GM12878 (cell line): ENCODE measurements at regions of chr7 and their contacts with region 1.

Region 1: GRCh38 chr7:6323967-6324701 is 51.7 kb upstream of the CYTH3 start:
- DNase-seq: no peak
- ATAC-seq: no peak
- H3K4me3 ChIP-seq: no peak overlapping the region
- H3K27ac ChIP-seq: no peak overlapping the region
- H3K4me1 ChIP-seq: no peaks in the 10 kb centered on the region
- H3K27me3 ChIP-seq: no peaks in the 10 kb centered on the region
- CTCF ChIP-seq: no peak
- EP300 ChIP-seq: no peak
- POLR2A ChIP-seq: no peak
- RAD21 ChIP-seq: no peak

Region 2: GRCh38 chr7:5854738-5855137 is 469.4 kb before region 1 on chr7:
- CTCF ChIA-PET with region 1: interaction called, 15 read pairs
- POLR2A ChIA-PET with region 1: no interaction called
- RAD21 ChIA-PET with region 1: interaction called, 3 read pairs
- SMC1A ChIA-PET with region 1: interaction called, 4 read pairs
- in situ Hi-C with region 1: no loop called
- intact Hi-C with region 1: loop called (anchors 10 kb)
- DNase-seq: no peak
- ATAC-seq: no peak
- H3K4me3 ChIP-seq: no peak overlapping the region
- H3K27ac ChIP-seq: no peak overlapping the region
- H3K4me1 ChIP-seq: no peaks in the 10 kb centered on the region
- H3K27me3 ChIP-seq: no peaks in the 10 kb centered on the region
- CTCF ChIP-seq: no peak
- EP300 ChIP-seq: no peak
- POLR2A ChIP-seq: no peak
- RAD21 ChIP-seq: no peak

Region 3: DNA sequence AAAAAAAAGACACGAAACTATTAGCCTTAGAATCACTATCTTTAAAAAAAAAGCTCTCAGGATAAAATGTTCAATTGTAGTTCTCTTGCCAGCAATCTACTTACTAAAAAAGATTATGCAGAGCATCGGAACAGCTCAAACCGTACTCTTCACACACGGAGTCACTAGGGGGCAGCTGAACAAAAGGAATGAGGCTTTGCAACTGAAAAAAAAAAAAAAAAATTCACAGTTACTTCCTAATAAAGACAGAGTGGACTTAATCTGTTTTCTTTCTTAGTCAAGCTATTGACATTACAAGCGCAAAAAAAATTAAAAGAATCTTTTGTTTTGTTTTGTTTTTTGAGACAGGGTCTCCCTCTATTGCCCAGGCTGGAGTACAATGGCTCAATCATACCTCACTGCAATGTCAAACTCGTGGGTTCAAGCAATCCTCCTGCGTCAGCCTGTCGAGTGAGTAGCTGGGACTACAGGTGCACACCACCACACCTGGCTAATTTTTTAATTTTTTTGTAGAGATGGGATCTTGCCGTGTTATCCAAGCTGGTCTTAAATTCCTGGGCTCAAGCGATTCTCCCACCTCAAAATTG is 326.8 kb before region 1 on chr7:
- CTCF ChIA-PET with region 1: interaction called, 20 read pairs
- POLR2A ChIA-PET with region 1: interaction called, 4 read pairs
- RAD21 ChIA-PET with region 1: interaction called, 6 read pairs
- SMC1A ChIA-PET with region 1: interaction called, 10 read pairs
- in situ Hi-C with region 1: no loop called
- intact Hi-C with region 1: loop called (anchors 2 kb)
- DNase-seq: no peak
- ATAC-seq: peak; percentile 71
- H3K4me3 ChIP-seq: no peak overlapping the region
- H3K27ac ChIP-seq: no peak overlapping the region
- H3K4me1 ChIP-seq: no peaks in the 10 kb centered on the region
- H3K27me3 ChIP-seq: no peaks in the 10 kb centered on the region
- CTCF ChIP-seq: peak; percentile 52 to 61 (median 56)
- EP300 ChIP-seq: no peak
- POLR2A ChIP-seq: no peak
- RAD21 ChIP-seq: peak; percentile 76

Region 4: DNA sequence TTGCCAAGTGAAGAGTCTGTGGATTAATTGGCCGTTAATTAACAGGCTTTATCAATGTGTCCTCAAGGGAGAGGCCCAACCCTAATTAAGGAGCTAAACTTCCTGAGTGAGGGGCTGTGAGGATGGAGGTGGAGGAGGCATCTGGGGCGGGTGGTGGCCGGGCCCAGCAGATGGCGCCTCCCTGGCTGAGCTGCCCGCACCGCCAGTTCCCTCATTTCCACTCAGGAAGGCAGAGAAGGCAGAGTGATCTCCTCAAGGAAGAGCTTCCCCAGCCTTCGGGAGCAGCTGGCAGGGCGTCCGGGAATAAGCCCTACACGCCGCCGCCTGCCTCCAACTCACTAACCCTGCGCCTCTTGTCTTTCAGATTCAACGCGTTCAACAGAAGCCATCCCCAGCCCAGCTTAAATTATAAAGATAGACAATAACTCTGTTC is 163.9 kb before region 1 on chr7:
- CTCF ChIA-PET with region 1: interaction called, 6 read pairs
- POLR2A ChIA-PET with region 1: no interaction called
- RAD21 ChIA-PET with region 1: interaction called, 3 read pairs
- SMC1A ChIA-PET with region 1: interaction called, 4 read pairs
- in situ Hi-C with region 1: no loop called
- intact Hi-C with region 1: loop called (anchors 1 kb)
- DNase-seq: no peak
- ATAC-seq: peak; percentile 16; the same call in 1 of the 3 replicates
- H3K4me3 ChIP-seq: no peak overlapping the region
- H3K27ac ChIP-seq: no peak overlapping the region
- H3K4me1 ChIP-seq: peaks cover 13% of the 10 kb centered on the region
- H3K27me3 ChIP-seq: no peaks in the 10 kb centered on the region
- CTCF ChIP-seq: peak in 1 of 3 experiments; percentile 16; a peak in 1 of 6 replicates
- EP300 ChIP-seq: no peak
- POLR2A ChIP-seq: no peak
- RAD21 ChIP-seq: no peak

Region 5: DNA sequence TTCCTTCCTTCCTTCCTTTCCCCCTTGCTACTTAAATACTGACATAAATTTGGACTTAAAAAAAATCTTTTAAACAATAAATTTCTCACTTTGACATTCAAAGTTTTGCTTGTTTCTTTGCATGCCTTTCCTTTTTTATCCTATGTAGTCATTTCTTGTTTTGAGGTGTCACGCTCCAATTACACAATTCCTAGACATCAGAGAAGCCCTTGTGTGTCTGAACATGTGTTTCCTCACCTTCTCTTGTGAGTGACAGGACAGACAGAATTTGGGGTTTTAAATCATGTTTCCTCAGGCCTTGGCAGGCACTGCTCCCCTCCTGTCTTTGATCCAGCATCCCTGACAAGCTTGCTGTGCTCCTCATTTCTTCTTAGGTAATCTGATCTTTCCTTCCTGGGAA is 143.0 kb before region 1 on chr7:
- CTCF ChIA-PET with region 1: no interaction called
- POLR2A ChIA-PET with region 1: no interaction called
- RAD21 ChIA-PET with region 1: no interaction called
- SMC1A ChIA-PET with region 1: no interaction called
- in situ Hi-C with region 1: no loop called
- intact Hi-C with region 1: loop called (anchors 5 kb)
- DNase-seq: no peak
- ATAC-seq: no peak
- H3K4me3 ChIP-seq: no peak overlapping the region
- H3K27ac ChIP-seq: no peak overlapping the region
- H3K4me1 ChIP-seq: peaks cover 5% of the 10 kb centered on the region
- H3K27me3 ChIP-seq: no peaks in the 10 kb centered on the region
- CTCF ChIP-seq: no peak
- EP300 ChIP-seq: no peak
- POLR2A ChIP-seq: no peak
- RAD21 ChIP-seq: no peak

Region 6: DNA sequence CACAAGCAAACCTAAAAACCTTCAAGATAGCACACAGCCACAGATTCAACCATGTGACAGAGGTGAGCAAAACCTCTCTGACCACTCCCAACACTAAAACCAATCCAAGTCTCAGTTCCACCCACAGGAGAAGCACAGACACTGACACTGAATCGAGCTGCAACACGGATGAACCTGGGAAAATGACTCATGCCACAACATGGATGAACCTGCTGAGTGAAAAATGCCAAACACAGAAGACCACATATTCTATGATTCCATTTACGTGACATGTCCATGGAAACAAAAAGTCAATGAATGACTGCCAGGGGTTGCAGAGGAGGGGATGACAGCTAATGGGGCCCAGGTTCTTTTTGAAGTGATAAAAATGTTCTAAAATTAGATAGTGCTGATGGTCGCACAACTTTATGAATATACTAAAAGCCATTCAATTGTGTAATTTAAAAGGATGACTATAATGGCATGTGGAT is 73.7 kb before region 1 on chr7:
- CTCF ChIA-PET with region 1: interaction called, 4 read pairs
- POLR2A ChIA-PET with region 1: no interaction called
- RAD21 ChIA-PET with region 1: interaction called, 3 read pairs
- SMC1A ChIA-PET with region 1: interaction called, 4 read pairs
- in situ Hi-C with region 1: no loop called
- intact Hi-C with region 1: loop called (anchors 2 kb)
- DNase-seq: peak; percentile 93
- ATAC-seq: peak; percentile 95
- H3K4me3 ChIP-seq: peak overlapping the region; percentile 15; the same call in 1 of the 2 replicates
- H3K27ac ChIP-seq: peak overlapping the region; percentile 77
- H3K4me1 ChIP-seq: peaks cover 17% of the 10 kb centered on the region
- H3K27me3 ChIP-seq: no peaks in the 10 kb centered on the region
- CTCF ChIP-seq: no peak
- EP300 ChIP-seq: peak; percentile 69 to 84; a peak in 3 of 4 replicates
- POLR2A ChIP-seq: no peak
- RAD21 ChIP-seq: peak; percentile 42; the same call in 1 of the 2 replicates

Region 7: GRCh38 chr7:6350433-6351058 is 26.4 kb after region 1 on chr7:
- CTCF ChIA-PET with region 1: interaction called, 3 read pairs
- POLR2A ChIA-PET with region 1: no interaction called
- RAD21 ChIA-PET with region 1: no interaction called
- SMC1A ChIA-PET with region 1: interaction called, 12 read pairs
- in situ Hi-C with region 1: no loop called
- intact Hi-C with region 1: no loop called
- DNase-seq: no peak
- ATAC-seq: no peak
- H3K4me3 ChIP-seq: no peak overlapping the region
- H3K27ac ChIP-seq: no peak overlapping the region
- H3K4me1 ChIP-seq: peaks cover 10% of the 10 kb centered on the region; the same call in 1 of the 2 replicates
- H3K27me3 ChIP-seq: no peaks in the 10 kb centered on the region
- CTCF ChIP-seq: no peak
- EP300 ChIP-seq: no peak
- POLR2A ChIP-seq: no peak
- RAD21 ChIP-seq: no peak